AG04449 (cell line): ENCODE measurements at regions of chr22 and their contacts with region 1.

Region 1: GRCh38 chr22:27420817-27421361 is 380.7 kb downstream of the MN1 start:
- DNase-seq: peak; percentile 79
- H3K4me3 ChIP-seq: peak overlapping the region; percentile 21
- CTCF ChIP-seq: no peak

Region 2: DNA sequence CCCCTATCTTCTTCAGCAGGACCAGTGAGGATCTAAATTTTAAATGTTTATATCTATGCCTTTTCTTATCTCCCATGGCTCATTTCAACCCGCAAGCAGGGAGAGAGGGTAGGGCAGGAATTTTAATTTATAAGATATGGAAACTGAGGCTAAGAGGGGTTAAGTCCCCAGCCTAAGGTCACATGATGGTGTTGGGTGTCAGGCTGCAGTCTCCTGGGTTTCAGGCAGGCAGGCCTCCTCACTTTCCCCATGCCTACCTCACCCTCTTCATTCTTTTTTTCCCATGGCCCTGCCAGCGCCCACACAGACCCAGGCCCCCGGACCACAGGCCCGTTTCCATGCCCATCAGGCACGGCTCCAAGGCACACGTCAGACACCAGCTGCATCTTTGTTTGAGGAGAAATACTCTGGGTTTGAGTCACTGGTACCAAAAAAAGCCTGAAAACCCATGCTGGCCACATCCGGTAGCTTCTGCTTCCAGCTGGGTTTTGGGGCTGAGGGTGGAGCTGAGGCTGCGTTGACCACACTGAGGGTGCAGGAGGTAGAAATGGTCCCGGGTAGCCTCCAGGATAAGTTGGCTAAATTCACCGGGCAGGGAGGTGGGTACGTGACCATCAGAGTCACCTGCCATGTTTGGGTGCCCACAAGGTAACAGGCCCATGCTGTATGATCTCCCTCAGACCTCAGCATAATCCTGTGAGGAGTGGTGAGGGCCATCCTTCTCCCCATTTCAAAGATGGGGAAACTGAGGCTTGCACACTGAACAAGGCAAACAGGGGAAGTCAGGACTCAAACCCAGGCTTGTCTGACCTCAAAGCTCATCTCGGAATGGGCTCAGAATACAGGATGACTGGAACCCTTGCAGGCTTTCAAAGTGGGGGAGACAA is 810.6 kb before region 1 on chr22:
- CTCF ChIA-PET with region 1: no interaction called
- POLR2A ChIA-PET with region 1: no interaction called
- DNase-seq: peak; percentile 64
- H3K4me3 ChIP-seq: no peak overlapping the region
- CTCF ChIP-seq: no peak

Region 3: DNA sequence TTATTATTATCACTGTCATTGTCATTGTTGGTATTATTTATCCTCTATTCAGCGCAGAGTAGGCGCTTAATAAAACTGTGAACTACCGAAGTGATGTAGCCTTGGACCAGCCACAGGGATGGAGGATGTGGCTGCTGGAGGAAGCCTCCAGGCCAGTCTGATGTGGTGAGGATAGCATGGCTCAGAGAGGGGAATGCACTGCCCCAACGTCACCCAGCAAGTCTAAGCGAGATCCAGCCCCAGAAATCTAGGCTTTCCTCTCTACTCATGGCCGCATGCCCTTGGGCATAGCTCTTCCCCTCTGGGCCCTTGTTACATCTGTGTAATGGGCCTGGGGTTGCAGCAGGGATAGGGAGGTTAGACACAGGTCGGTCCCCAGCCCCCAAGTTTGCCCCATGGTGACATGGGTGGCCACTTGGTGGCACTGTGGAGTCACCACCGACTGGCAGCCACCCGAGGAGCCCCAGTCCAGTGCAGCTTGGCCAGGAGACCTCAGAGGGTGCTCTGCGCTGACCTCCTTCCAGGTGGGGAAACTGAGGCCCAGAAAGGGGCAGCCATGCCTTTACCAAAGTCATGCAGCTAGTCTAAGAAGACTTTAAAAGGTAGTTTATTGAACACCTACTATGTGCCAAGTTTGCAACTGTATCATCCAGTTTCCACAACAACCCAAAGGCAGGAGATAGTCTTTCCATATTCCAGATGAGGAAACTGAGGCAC is 15.1 kb before region 1 on chr22:
- CTCF ChIA-PET with region 1: interaction called, 32 read pairs
- POLR2A ChIA-PET with region 1: no interaction called
- DNase-seq: no peak
- H3K4me3 ChIP-seq: no peak overlapping the region
- CTCF ChIP-seq: peak; percentile 85

Region 4: GRCh38 chr22:27435839-27436576 is 15.1 kb after region 1 on chr22:
- CTCF ChIA-PET with region 1: no interaction called
- POLR2A ChIA-PET with region 1: no interaction called
- DNase-seq: no peak
- H3K4me3 ChIP-seq: no peak overlapping the region
- CTCF ChIP-seq: no peak

Region 5: GRCh38 chr22:27804470-27805297 is 383.8 kb after region 1 on chr22:
- CTCF ChIA-PET with region 1: interaction called, 10 read pairs
- POLR2A ChIA-PET with region 1: no interaction called
- DNase-seq: no peak
- H3K4me3 ChIP-seq: peak overlapping the region; percentile 18; the same call in 1 of the 2 replicates
- CTCF ChIP-seq: peak; percentile 73